Activated T-helper 1 cell treated with anti-CD3 and anti-CD28 coated beads, Interleukin-12 subunit alpha, Interleukin-12 subunit beta, Interleukin-2, Interleukin-4 antibody, amounts not matched to agents 30 ng/mL and 10 ng/mL and 1 ng/mL, durations not matched to agents 14 hours and 24 hours and 36 hours (primary cell): ENCODE measurements at regions of chr7 and their contacts with region 1.

Region 1: DNA sequence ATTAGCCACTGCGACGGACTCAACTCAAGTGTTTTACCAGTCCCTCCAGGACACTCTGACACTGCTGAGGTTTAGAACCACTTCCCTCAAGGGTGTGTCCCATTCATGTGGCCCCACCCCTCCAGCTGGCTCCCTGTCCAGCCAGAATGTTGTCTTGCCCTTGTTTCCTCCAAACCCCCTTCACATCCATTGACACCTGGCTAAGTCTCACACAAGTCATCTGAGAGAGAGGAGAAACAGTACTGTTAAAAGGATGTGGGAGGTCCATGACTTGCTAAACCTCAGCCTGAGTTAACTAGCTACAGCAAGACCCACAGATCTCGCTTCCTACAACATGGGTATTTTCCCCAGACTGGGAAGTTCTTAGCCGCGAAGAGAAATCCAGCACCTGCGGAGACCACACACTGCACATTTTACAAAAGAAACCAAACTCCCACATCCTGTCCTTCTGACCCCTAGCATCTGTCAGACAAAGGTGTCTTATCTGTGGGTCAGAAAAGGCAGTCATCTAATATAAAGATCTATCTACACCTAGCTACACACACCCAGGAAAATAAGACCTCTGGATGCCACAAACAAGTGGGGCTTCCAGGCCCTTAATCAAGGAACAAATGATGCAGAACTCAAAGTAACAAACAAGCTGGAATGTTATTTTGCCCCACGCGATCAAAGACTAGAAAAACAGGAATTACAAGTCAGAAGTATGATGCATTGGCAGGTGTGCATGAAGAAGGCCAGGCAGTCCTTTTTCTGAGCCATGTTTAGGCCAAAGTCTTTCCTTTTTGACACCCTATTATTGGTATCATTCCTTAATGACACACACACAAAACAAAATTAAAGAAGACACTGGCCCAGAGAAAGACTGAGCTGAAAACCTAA is 13.9 kb downstream of the OSBPL3 start:
- DNase-seq: peak; percentile 52
- H3K4me3 Mint-ChIP-seq: peak overlapping the region; percentile 59
- H3K27ac Mint-ChIP-seq: peak overlapping the region; percentile 89
- H3K4me1 Mint-ChIP-seq: peaks cover 80% of the 10 kb centered on the region
- H3K27me3 Mint-ChIP-seq: no peaks in the 10 kb centered on the region

Region 2: GRCh38 chr7:24869572-24869971 is 96.5 kb before region 1 on chr7:
- intact Hi-C with region 1: loop called (anchors 1 kb)
- DNase-seq: no peak
- H3K4me3 Mint-ChIP-seq: no peak overlapping the region
- H3K27ac Mint-ChIP-seq: peak overlapping the region; percentile 13
- H3K4me1 Mint-ChIP-seq: peaks cover 49% of the 10 kb centered on the region
- H3K27me3 Mint-ChIP-seq: no peaks in the 10 kb centered on the region

Region 3: DNA sequence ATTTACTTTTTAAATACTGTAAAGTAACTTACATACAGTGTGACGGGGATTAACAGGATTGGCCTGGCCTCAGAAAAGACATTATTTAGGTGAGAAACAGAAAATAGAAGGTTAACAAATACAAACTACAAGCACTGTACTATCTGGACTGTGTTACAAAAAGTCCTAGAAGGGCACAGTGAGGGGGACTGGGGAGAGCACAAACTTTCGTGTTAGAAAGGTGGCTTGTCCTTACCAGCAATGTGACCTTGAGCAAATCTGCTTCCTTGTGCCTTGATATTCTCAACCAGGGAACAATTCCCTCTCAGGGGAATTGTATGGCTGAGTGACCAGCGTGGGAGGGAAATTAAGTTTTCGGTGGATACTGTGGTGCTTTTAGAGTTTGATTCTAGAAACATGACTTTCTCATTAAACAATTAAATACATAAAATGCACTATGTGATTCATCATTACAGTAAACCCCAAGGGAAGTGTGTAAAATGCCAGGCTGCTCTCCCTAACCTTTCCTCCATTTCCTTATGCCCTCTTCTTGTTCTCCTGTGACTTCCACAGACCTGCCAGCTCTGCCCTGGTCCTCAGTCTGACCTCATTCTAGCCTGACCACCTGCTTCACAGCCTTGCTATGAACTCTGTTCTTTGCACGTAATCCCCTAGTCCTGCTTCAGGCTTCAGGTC is 43.8 kb before region 1 on chr7:
- intact Hi-C with region 1: loop called (anchors 1 kb)
- DNase-seq: no peak
- H3K4me3 Mint-ChIP-seq: peak overlapping the region; percentile 3
- H3K27ac Mint-ChIP-seq: peak overlapping the region; percentile 91
- H3K4me1 Mint-ChIP-seq: peaks cover 95% of the 10 kb centered on the region
- H3K27me3 Mint-ChIP-seq: no peaks in the 10 kb centered on the region

Region 4: GRCh38 chr7:25028370-25029021 is 62.4 kb after region 1 on chr7:
- intact Hi-C with region 1: loop called (anchors 1 kb)
- DNase-seq: peak; percentile 13
- H3K4me3 Mint-ChIP-seq: peak overlapping the region; percentile 12
- H3K27ac Mint-ChIP-seq: peak overlapping the region; percentile 93
- H3K4me1 Mint-ChIP-seq: peaks cover 40% of the 10 kb centered on the region
- H3K27me3 Mint-ChIP-seq: peaks cover 12% of the 10 kb centered on the region

Region 5: GRCh38 chr7:25069900-25070443 is 103.9 kb after region 1 on chr7:
- intact Hi-C with region 1: loop called (anchors 5 kb)
- DNase-seq: peak; percentile 16
- H3K4me3 Mint-ChIP-seq: no peak overlapping the region
- H3K27ac Mint-ChIP-seq: no peak overlapping the region
- H3K4me1 Mint-ChIP-seq: peaks cover 27% of the 10 kb centered on the region
- H3K27me3 Mint-ChIP-seq: peaks cover 2% of the 10 kb centered on the region

Region 6: GRCh38 chr7:25333296-25333928 is 367.3 kb after region 1 on chr7:
- intact Hi-C with region 1: no loop called
- DNase-seq: no peak
- H3K4me3 Mint-ChIP-seq: no peak overlapping the region
- H3K27ac Mint-ChIP-seq: no peak overlapping the region
- H3K4me1 Mint-ChIP-seq: no peaks in the 10 kb centered on the region
- H3K27me3 Mint-ChIP-seq: peaks cover 4% of the 10 kb centered on the region